ENCODE measurements at regions of chr6 and their contacts with region 1.

Region 1: DNA sequence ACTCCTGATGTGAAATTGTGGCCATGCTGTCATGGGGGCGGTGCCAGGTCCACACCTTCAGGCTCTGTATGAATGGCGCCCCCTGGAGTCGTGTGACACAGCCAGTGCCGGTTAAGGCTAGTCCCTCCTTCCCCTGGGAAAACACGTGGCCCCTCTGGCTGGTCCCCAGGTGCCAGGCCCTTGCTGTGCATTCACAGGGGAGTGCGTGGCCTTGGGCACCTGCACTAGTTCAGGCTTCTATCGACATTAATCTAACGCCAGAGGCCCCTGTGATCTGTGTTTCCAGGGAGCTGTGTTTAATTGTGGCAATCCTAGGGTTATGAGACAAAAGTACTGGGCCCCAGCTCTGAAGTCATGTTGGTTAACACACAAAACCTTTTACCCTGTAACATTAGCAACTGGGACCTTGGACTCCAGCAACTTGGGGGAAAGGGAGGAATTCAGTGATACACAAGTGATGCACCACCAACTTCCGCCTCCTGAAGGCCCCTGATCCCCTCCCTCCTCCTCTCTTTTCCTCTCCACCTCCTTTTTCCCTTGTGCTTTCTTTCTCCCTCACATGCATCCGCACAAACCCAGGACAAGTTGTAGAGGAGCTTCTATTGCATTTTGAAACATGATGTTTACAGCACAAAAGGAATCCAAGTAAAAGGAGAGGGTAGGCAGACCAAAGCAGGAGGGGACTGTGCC is 74.0 kb downstream of the SSR1 start:
- DNase-seq: peak; percentile 58
- H3K4me3 ChIP-seq: no peak overlapping the region
- H3K27ac ChIP-seq: no peak overlapping the region
- H3K4me1 ChIP-seq: peaks cover 15% of the 10 kb centered on the region
- H3K27me3 ChIP-seq: no peaks in the 10 kb centered on the region
- CTCF ChIP-seq: peak; percentile 42 to 72

Region 2: GRCh38 chr6:6351511-6352025 is 887.5 kb before region 1 on chr6:
- CTCF ChIA-PET with region 1: no interaction called
- dilution Hi-C with region 1: no loop called
- in situ Hi-C with region 1: no loop called
- intact Hi-C with region 1: no loop called
- DNase-seq: peak; percentile 3
- H3K4me3 ChIP-seq: no peak overlapping the region
- H3K27ac ChIP-seq: no peak overlapping the region
- H3K4me1 ChIP-seq: no peaks in the 10 kb centered on the region
- H3K27me3 ChIP-seq: peaks cover 2% of the 10 kb centered on the region
- CTCF ChIP-seq: no peak

Region 3: DNA sequence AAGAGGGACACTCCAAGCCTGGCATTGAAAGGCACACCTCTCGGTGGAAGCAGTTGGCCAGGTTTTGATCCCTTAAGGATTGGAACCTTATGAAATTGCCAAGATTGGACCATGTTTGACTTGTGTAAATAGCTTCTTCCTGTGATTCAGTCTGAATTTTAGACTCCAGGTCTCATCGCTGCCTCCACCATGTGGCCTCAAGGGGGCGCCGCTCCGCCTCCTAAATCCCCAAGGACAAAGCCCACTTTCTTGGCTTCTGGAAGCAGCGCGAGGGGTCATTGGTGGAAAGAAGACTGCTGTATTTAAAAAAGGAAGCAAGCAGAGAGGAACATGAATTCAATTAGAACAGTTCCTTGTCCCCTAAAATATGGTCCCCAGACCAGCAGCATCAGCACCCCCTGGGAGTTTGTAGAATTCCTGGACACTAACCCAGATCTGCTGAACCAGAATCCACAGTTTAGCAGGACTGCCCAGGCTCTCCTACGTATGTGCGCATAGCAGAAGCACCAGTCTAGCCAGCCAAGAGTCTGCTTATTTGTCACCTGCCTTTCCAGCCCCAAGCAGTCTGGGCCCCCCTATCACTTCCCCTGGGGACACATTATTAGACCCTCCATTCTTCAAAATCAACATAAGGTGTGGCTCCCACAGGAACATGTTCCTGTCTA is 542.0 kb before region 1 on chr6:
- CTCF ChIA-PET with region 1: no interaction called
- dilution Hi-C with region 1: no loop called
- in situ Hi-C with region 1: loop called in 1 of 2 experiments (anchors 10 kb)
- intact Hi-C with region 1: no loop called
- DNase-seq: peak; percentile 50
- H3K4me3 ChIP-seq: no peak overlapping the region
- H3K27ac ChIP-seq: no peak overlapping the region
- H3K4me1 ChIP-seq: peaks cover 14% of the 10 kb centered on the region
- H3K27me3 ChIP-seq: no peaks in the 10 kb centered on the region
- CTCF ChIP-seq: peak; percentile 79 to 83

Region 4: DNA sequence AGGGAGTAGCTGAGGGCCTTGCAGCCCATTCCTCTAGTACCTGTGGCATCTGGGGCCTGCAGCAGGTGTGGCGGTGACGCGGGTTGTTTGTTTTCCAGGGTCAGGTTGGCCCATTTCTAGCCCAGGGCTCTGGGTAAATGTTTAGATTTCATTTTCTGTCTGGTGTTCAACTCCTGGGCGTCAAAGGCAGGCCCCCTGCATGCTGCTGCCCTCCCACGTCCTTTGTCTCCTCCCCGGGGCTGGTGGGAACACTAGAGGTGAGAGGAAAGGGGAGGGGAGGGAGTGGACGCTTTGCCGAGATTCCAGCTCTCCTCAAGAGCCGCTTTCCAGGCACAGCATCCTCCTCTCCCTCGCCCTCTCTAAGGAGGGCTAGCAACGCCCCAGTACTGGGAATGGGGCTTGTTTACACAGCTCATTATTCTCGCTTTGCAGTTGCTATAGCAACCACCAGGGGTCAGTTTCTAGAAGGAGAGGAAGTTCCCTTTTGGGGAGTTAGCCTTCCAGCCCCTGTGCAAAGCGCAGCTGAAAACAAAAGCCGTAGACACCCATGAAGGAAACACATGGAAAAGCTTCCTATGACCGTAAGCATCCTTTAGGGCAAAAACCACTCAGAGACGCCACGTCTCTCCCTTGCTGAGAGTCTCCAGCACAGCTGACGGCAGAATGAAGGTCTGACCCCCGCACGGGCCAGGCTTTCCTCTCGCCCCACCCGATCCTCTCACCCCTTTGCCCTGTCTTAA is 480.0 kb before region 1 on chr6:
- CTCF ChIA-PET with region 1: no interaction called
- dilution Hi-C with region 1: no loop called
- in situ Hi-C with region 1: no loop called
- intact Hi-C with region 1: loop called (anchors 1 kb)
- DNase-seq: peak; percentile 23
- H3K4me3 ChIP-seq: no peak overlapping the region
- H3K27ac ChIP-seq: no peak overlapping the region
- H3K4me1 ChIP-seq: no peaks in the 10 kb centered on the region
- H3K27me3 ChIP-seq: no peaks in the 10 kb centered on the region
- CTCF ChIP-seq: peak; percentile 48 to 54

Region 5: GRCh38 chr6:6788394-6789020 is 450.5 kb before region 1 on chr6:
- CTCF ChIA-PET with region 1: interaction called, 4 read pairs
- dilution Hi-C with region 1: no loop called
- in situ Hi-C with region 1: no loop called
- intact Hi-C with region 1: loop called (anchors 1 kb)
- DNase-seq: no peak
- H3K4me3 ChIP-seq: no peak overlapping the region
- H3K27ac ChIP-seq: no peak overlapping the region
- H3K4me1 ChIP-seq: peaks cover 9% of the 10 kb centered on the region
- H3K27me3 ChIP-seq: no peaks in the 10 kb centered on the region
- CTCF ChIP-seq: peak; percentile 66 to 75

Measured in mammary epithelial cell (primary cell).